ENCODE measurements at regions of chr6 and their contacts with region 1.

Region 1: DNA sequence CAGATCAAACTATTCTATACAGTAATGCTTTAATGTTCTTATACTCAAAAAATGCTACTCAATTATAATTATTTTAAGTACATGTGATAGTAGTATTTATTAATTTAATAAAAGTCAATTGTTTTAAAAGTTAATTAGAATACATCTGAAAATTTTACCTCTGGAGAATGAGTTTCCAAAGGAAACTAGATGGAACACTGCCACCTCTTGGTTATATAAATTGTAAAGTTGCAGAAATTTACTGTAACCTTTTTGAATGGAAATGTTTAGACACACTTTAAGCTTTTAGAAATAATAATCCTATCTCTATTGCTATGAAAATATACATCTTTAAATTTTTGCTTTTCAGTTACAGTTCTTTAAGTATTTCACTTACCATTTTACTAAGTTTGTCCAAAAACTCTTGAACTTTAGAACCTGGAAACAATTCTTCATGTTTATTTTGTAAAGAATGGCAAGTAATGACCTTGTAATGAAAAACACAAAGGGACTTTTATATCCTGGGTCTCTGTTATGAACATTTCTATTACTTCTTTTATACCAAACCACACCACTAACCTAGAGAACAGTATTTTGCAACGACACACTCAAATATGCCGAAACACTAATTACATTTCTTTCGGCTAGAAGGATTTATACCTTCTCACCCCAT is 10.9 kb upstream of the BMP5 start:
- DNase-seq: no peak
- ATAC-seq: no peak
- H3K4me3 ChIP-seq: no peak overlapping the region
- H3K4me3 Mint-ChIP-seq: no peak overlapping the region
- H3K27ac ChIP-seq: no peak overlapping the region
- H3K27ac Mint-ChIP-seq: no peak overlapping the region
- H3K4me1 ChIP-seq: no peaks in the 10 kb centered on the region
- H3K4me1 Mint-ChIP-seq: no peaks in the 10 kb centered on the region
- H3K27me3 ChIP-seq: no peaks in the 10 kb centered on the region
- H3K27me3 Mint-ChIP-seq: no peaks in the 10 kb centered on the region

Region 2: DNA sequence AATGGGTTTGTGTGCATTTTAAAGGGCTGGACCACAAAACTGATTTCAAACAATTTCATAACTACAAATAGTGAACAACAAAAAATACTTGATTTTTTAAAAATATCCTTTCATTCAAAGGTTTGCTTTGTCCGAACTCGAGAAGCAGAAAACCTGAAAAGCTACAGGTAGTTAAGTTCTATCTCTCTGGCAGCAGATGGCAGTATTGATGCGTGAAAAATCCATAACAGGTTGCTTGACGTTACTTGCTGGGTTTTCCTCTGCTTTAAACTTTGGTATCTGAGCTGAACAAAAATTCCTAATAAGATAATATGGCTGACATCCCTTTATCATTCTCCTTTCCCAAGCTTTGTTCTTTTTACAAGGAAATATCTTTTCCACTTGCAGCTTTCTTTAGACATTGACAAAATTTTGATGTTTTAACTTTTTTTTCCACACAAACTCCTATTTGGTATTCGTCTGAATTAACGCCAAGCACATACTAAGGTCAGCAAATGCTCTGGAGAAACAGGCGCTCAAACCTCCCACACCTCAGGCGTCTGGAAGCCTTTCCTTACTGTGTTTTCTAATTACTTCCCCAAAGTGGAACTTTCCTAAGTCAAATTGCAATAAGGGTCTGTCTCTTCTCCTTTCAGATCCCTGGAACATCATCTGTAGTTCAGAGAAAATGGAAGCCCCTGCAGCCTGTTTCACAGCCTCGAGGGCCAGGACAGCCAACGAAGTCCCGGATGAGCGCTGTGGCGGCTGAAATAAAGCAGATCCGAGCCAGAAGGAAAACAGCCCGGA is 609.4 kb before region 1 on chr6:
- CTCF ChIA-PET with region 1: no interaction called
- POLR2A ChIA-PET with region 1: no interaction called
- intact Hi-C with region 1: loop called in 1 of 2 experiments (anchors 5 kb)
- DNase-seq: no peak
- ATAC-seq: no peak
- H3K4me3 ChIP-seq: no peak overlapping the region
- H3K4me3 Mint-ChIP-seq: no peak overlapping the region
- H3K27ac ChIP-seq: no peak overlapping the region
- H3K27ac Mint-ChIP-seq: no peak overlapping the region
- H3K4me1 ChIP-seq: no peaks in the 10 kb centered on the region
- H3K4me1 Mint-ChIP-seq: no peaks in the 10 kb centered on the region
- H3K27me3 ChIP-seq: no peaks in the 10 kb centered on the region
- H3K27me3 Mint-ChIP-seq: no peaks in the 10 kb centered on the region

Region 3: GRCh38 chr6:55445648-55446204 is 440.6 kb before region 1 on chr6:
- CTCF ChIA-PET with region 1: no interaction called
- POLR2A ChIA-PET with region 1: no interaction called
- intact Hi-C with region 1: loop called in 1 of 2 experiments (anchors 5 kb)
- DNase-seq: no peak
- ATAC-seq: no peak
- H3K4me3 ChIP-seq: no peak overlapping the region
- H3K4me3 Mint-ChIP-seq: no peak overlapping the region
- H3K27ac ChIP-seq: no peak overlapping the region
- H3K27ac Mint-ChIP-seq: no peak overlapping the region
- H3K4me1 ChIP-seq: no peaks in the 10 kb centered on the region
- H3K4me1 Mint-ChIP-seq: no peaks in the 10 kb centered on the region
- H3K27me3 ChIP-seq: no peaks in the 10 kb centered on the region
- H3K27me3 Mint-ChIP-seq: no peaks in the 10 kb centered on the region

Region 4: DNA sequence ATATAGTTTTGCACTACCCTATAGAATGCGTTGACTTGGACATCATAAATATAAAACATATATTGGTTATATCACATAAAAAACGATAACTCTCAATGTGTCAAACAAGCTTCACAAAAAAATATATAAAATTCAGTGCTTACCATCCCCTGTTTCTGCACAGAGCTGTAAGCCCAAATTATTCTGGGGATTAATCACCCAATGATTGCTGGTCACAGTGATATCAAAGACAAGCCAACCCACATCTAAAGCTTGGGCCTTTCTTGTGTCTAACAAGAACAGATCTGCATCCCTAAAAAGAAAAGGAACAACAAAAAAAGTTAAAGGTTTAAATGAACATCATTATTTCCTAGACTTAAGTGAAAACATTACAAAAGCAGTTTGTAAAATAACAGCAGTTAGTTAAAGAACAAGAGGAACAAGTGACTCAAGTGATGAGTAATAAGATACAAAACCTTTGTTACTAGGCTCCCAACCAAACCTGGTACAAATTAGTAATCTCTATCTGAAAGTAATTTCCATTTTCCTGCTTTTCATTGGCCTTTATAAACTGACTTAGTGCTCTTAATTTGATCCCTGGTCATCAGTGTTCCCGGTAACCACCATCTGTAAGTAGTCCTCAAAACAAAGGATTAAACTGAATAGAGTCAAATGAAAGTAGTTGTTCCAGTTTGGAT is 92.0 kb before region 1 on chr6:
- CTCF ChIA-PET with region 1: no interaction called
- POLR2A ChIA-PET with region 1: no interaction called
- intact Hi-C with region 1: no loop called
- DNase-seq: no peak
- ATAC-seq: no peak
- H3K4me3 ChIP-seq: no peak overlapping the region
- H3K4me3 Mint-ChIP-seq: no peak overlapping the region
- H3K27ac ChIP-seq: no peak overlapping the region
- H3K27ac Mint-ChIP-seq: no peak overlapping the region
- H3K4me1 ChIP-seq: no peaks in the 10 kb centered on the region
- H3K4me1 Mint-ChIP-seq: no peaks in the 10 kb centered on the region
- H3K27me3 ChIP-seq: no peaks in the 10 kb centered on the region
- H3K27me3 Mint-ChIP-seq: no peaks in the 10 kb centered on the region

Region 5: GRCh38 chr6:55868771-55869479 is 17.4 kb before region 1 on chr6:
- CTCF ChIA-PET with region 1: no interaction called
- POLR2A ChIA-PET with region 1: no interaction called
- intact Hi-C with region 1: no loop called
- DNase-seq: peak in 1 of 9 donors; percentile 23
- ATAC-seq: no peak
- H3K4me3 ChIP-seq: no peak overlapping the region
- H3K4me3 Mint-ChIP-seq: no peak overlapping the region
- H3K27ac ChIP-seq: no peak overlapping the region
- H3K27ac Mint-ChIP-seq: no peak overlapping the region
- H3K4me1 ChIP-seq: no peaks in the 10 kb centered on the region
- H3K4me1 Mint-ChIP-seq: peaks cover 0 to 3% (median 0%) of the 10 kb centered on the region in 7 donors
- H3K27me3 ChIP-seq: no peaks in the 10 kb centered on the region
- H3K27me3 Mint-ChIP-seq: no peaks in the 10 kb centered on the region

Region 6: GRCh38 chr6:55913213-55914195 is 27.2 kb after region 1 on chr6:
- CTCF ChIA-PET with region 1: no interaction called
- POLR2A ChIA-PET with region 1: no interaction called
- intact Hi-C with region 1: no loop called
- DNase-seq: no peak
- ATAC-seq: no peak
- H3K4me3 ChIP-seq: no peak overlapping the region
- H3K4me3 Mint-ChIP-seq: no peak overlapping the region
- H3K27ac ChIP-seq: no peak overlapping the region
- H3K27ac Mint-ChIP-seq: no peak overlapping the region
- H3K4me1 ChIP-seq: no peaks in the 10 kb centered on the region
- H3K4me1 Mint-ChIP-seq: no peaks in the 10 kb centered on the region
- H3K27me3 ChIP-seq: no peaks in the 10 kb centered on the region
- H3K27me3 Mint-ChIP-seq: no peaks in the 10 kb centered on the region

Region 7: GRCh38 chr6:56102216-56102615 is 215.9 kb after region 1 on chr6:
- CTCF ChIA-PET with region 1: no interaction called
- POLR2A ChIA-PET with region 1: no interaction called
- intact Hi-C with region 1: no loop called
- DNase-seq: no peak
- ATAC-seq: no peak
- H3K4me3 ChIP-seq: no peak overlapping the region
- H3K4me3 Mint-ChIP-seq: no peak overlapping the region
- H3K27ac ChIP-seq: no peak overlapping the region
- H3K27ac Mint-ChIP-seq: no peak overlapping the region
- H3K4me1 ChIP-seq: no peaks in the 10 kb centered on the region
- H3K4me1 Mint-ChIP-seq: peaks cover 0 to 2% (median 0%) of the 10 kb centered on the region in 7 donors
- H3K27me3 ChIP-seq: no peaks in the 10 kb centered on the region
- H3K27me3 Mint-ChIP-seq: no peaks in the 10 kb centered on the region